ENCODE measurements at regions of chr13 and their contacts with region 1.

Region 1: GRCh38 chr13:20945952-20946383 is 43.4 kb upstream of the XPO4 start:
- DNase-seq: no peak
- ATAC-seq: no peak
- H3K4me3 ChIP-seq: no peak overlapping the region
- H3K27ac ChIP-seq: no peak overlapping the region
- H3K4me1 ChIP-seq: peaks cover 6% of the 10 kb centered on the region
- H3K27me3 ChIP-seq: no peaks in the 10 kb centered on the region
- CTCF ChIP-seq: no peak

Region 2: DNA sequence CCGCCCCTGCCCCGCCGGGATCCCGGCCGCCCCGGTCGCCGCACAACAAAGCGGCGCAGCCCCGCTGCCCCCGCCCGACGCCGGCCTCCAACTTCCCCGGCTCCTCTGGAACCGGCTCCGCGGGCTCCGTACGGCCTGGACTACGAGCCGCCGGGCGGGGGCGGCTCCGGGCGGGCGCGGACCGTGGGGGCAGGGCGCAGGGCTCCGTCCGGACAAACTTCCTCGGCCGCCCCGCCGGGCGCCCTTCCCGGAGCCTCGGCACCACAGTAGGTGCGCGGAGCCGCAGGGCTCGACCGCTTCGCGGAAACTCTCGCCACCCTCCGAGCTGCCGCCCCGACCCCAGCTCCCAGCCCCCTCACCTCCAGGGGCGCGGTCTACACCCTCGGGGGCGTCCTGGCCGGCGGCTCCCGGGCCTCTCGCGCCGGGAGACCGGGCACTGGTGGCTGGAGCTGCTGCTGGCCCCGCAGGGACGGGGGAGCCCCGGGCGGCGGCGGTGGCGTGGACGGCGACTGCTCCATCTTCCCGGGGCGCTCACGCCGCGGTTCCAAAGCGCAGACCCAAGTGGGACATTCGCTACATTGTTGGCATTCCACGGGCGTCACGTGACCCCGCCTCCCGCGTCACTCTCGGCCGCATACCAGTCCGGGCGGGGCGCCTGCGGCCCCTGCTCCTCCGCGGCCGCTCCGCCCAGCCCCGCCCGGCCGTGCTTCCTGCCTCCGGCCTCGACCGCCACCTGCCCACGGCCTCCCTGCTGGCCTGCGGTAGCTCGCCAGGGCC is 115.2 kb after region 1 on chr13 and contains the start of gene LATS2:
- CTCF ChIA-PET with region 1: no interaction called
- POLR2A ChIA-PET with region 1: no interaction called
- intact Hi-C with region 1: loop called (anchors 1 kb)
- DNase-seq: peak; percentile 94
- ATAC-seq: peak; percentile 83
- H3K4me3 ChIP-seq: peak within 1 kb of the TSS; percentile 96
- H3K27ac ChIP-seq: peak within 1 kb of the TSS; percentile 75
- H3K4me1 ChIP-seq: peaks cover 18% of the 10 kb centered on the region
- H3K27me3 ChIP-seq: no peaks in the 10 kb centered on the region
- CTCF ChIP-seq: no peak
- total RNA-seq, gene LATS2: 11.0 and 11.1 TPM in 2 replicates

Region 3: DNA sequence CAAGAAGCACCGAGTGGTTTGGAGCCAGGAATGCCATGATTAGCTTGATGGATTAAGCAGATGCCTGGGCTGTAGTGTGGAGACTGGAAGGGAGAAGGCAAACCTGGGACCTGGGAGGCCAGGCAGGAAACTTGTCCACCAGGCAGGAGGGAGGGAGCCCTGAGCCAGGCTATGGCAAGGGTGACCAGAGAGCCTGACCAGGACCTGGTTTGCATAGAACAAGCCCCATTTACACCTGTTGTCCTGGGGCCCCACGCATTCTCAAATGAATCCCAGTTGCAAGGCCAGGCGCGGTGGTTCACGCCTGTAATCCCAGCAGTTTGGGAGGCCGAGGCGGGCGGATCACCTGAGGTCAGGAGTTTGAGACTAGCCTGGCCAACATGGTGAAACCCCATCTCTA is 165.6 kb after region 1 on chr13:
- CTCF ChIA-PET with region 1: no interaction called
- POLR2A ChIA-PET with region 1: no interaction called
- intact Hi-C with region 1: loop called (anchors 2 kb)
- DNase-seq: no peak
- ATAC-seq: no peak
- H3K4me3 ChIP-seq: no peak overlapping the region
- H3K27ac ChIP-seq: no peak overlapping the region
- H3K4me1 ChIP-seq: peaks cover under 1% of the 10 kb centered on the region; the same call in 1 of the 2 replicates
- H3K27me3 ChIP-seq: no peaks in the 10 kb centered on the region
- CTCF ChIP-seq: no peak

Region 4: DNA sequence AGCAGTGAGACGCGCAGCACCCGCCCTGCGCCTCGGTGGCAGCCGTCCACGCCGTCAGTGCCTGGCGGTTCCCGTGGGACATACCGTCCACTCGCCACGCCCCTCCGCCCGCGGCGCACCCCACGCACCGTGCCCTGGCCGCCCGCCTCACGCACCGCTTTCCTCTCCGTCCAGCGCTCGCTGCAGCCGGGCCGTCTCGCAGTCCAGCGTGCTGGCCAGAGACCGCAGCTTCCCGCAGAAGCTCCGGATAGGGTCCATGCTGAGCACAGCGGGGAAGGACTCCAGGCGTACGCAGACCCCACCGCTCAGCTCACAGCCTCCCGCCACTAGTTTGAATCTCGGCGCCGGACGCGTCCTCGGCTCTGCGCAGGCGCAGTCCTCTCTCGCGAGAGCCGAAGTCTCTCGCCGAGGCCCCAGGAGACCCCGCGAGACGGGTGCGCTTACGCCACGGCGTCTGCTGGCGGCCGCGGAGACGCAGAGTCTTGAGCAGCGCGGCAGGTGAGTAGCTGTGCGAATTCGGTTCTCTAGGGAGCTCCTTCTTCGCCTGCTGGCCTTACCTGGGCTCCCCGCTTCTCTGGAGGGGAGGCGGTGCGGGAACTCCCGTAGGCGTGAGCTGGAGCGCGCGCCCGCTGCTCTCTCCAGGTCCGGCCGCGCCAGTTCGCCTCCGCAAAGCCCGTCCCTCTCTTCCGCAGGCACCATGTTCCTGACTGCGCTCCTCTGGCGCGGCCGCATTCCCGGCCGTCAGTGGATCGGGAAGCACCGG is 230.4 kb after region 1 on chr13 and contains the starts of genes MRPL57 and SKA3:
- CTCF ChIA-PET with region 1: interaction called, 5 read pairs
- POLR2A ChIA-PET with region 1: interaction called, 7 read pairs
- intact Hi-C with region 1: loop called (anchors 1 kb)
- DNase-seq: peak; percentile 96
- ATAC-seq: peak; percentile 87
- H3K4me3 ChIP-seq: peak within 1 kb of the TSS; percentile 92
- H3K27ac ChIP-seq: peak within 1 kb of the TSS; percentile 81
- H3K4me1 ChIP-seq: peaks cover 17% of the 10 kb centered on the region; the same call in 1 of the 2 replicates
- H3K27me3 ChIP-seq: no peaks in the 10 kb centered on the region
- CTCF ChIP-seq: no peak
- total RNA-seq, gene MRPL57: 56.4 and 92.3 TPM in 2 replicates
- total RNA-seq, gene SKA3: 29.0 and 32.4 TPM in 2 replicates

Region 5: DNA sequence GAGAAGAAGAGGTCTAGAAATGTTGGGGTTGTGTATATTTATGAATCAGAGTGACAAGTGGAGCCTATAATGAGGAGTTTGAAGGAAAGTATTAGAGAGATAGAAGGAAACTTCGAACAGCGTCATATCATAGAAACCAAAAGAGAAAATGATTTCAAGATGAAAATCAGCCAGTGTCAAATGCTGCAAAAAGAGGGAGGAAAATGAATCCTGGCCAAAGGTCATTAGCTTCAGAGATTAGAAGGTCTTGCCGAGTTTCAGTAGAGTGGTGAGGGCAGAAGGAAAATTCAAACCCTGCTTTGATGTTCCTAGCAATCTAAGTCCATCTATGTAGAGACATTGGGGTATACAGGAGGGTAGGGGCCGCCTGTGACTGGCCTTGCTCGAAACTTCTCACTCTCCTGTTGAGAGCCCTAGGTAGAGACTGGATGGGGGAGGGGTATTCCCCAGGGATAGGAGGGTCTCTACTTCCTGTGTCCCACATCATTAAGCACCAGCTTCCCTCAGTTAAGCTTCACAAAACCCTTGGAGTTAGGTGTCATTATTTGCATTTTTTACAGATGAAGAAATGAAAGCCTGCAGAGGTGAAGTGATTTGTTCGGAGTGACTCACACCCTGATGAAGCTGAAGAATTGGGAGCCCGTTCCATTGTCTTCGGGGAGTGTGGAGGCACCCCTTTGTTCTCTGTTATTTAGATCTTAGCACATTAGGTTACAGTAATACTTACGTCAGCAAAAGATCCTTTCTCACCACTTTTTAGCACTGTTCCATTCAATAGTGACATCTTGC is 787.7 kb after region 1 on chr13:
- CTCF ChIA-PET with region 1: no interaction called
- POLR2A ChIA-PET with region 1: no interaction called
- intact Hi-C with region 1: no loop called
- DNase-seq: no peak
- ATAC-seq: no peak
- H3K4me3 ChIP-seq: no peak overlapping the region
- H3K27ac ChIP-seq: no peak overlapping the region
- H3K4me1 ChIP-seq: no peaks in the 10 kb centered on the region
- H3K27me3 ChIP-seq: peaks cover 41% of the 10 kb centered on the region
- CTCF ChIP-seq: no peak